ENCODE measurements at regions of chr10 and their contacts with region 1.

Region 1: DNA sequence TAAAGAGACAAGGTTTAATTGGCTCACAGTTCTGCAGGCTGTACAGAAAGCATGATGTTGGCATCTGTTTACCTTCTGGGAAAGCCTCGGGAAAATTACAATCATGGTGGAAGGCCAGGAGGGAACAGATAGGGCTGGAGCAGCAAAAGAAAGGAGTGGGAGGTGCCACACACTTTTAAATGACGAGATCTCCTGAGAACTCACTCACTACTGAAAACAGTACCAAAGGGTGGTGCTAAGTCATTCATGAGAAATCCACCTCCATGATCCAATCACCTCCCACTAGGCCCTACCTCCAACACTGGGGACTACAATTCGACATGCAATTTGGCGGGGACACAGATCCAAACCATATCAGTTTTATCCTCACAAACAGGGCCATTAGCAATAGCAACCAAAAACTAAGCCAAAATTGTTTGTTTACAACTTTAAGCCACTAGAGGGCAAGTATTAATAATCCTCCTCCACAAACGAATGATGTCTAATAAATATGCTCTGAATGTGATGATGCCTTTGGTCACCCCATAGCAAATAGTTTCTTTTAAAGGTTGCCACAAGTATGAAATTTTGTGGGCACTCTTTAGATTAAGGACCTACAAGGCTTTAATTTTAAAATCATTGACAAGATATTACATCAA is 129.2 kb upstream of the NRBF2 start:
- H3K4me3 Mint-ChIP-seq: no peak overlapping the region
- H3K27ac Mint-ChIP-seq: no peak overlapping the region
- H3K4me1 Mint-ChIP-seq: no peaks in the 10 kb centered on the region
- H3K27me3 Mint-ChIP-seq: peaks cover 19% of the 10 kb centered on the region

Region 2: GRCh38 chr10:62594093-62594520 is 409.8 kb before region 1 on chr10:
- intact Hi-C with region 1: loop called (anchors 5 kb)
- H3K4me3 Mint-ChIP-seq: no peak overlapping the region
- H3K27ac Mint-ChIP-seq: peak overlapping the region; percentile 24
- H3K4me1 Mint-ChIP-seq: peaks cover 22% of the 10 kb centered on the region
- H3K27me3 Mint-ChIP-seq: no peaks in the 10 kb centered on the region

Region 3: GRCh38 chr10:62779487-62780248 is 224.3 kb before region 1 on chr10:
- intact Hi-C with region 1: no loop called
- H3K4me3 Mint-ChIP-seq: no peak overlapping the region
- H3K27ac Mint-ChIP-seq: no peak overlapping the region
- H3K4me1 Mint-ChIP-seq: peaks cover 16% of the 10 kb centered on the region
- H3K27me3 Mint-ChIP-seq: peaks cover 10% of the 10 kb centered on the region